ENCODE measurements at regions of chr10 and their contacts with region 1.

Region 1: GRCh38 chr10:125144693-125145623 is 15.4 kb downstream of the CTBP2 start:
- DNase-seq: no peak
- H3K4me3 ChIP-seq: no peak overlapping the region
- H3K27ac ChIP-seq: peak overlapping the region in 1 of 2 donors; percentile 14
- H3K4me1 ChIP-seq: peaks cover 7 to 94% (median 70%) of the 10 kb centered on the region in 4 donors
- H3K27me3 ChIP-seq: no peaks in the 10 kb centered on the region
- CTCF ChIP-seq: peak; percentile 17 to 21

Region 2: DNA sequence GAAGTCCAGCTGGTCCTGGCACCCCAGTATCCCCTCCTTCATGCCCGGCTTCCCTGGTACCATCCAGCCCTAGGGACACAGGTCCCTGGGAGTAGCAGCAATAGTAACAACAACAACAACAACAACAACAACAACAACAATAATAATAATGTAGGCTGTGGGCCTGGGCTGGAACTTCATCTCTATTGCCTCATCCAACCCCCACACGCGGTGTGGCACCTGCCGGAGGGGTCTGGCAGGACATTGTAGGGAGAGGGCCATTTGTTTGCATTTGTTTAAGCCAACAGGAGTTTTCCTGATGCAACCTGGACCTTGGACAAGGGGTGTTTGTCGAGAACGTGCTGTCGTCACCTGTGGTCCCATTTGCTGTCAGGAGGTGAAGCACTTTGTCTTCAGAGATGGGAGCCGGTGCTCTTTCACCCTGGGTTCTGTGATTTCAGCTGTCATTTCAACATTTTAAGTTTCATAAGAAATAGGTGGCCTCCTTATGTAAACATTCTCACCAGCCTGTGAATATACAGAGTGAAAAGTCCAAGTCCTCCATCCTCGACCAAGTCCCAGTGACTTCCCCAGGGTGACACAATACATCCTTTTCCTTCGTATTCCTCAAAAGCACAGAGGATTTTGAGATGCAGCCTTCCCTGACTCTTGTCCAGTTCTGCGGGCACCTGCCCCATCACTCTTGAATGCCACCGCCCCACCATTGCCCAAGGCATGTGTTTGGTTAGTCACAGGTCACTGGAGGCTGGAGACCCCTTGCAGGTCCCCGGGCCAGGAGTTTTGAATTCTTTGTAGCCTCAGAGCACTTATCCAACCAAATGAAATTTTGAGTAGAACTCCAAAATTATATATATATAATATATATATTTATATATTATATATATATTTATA is 674.2 kb before region 1 on chr10:
- intact Hi-C with region 1: loop called (anchors 5 kb)
- DNase-seq: no peak
- H3K4me3 ChIP-seq: no peak overlapping the region
- H3K27ac ChIP-seq: no peak overlapping the region
- H3K4me1 ChIP-seq: no peaks in the 10 kb centered on the region
- H3K27me3 ChIP-seq: no peaks in the 10 kb centered on the region
- CTCF ChIP-seq: no peak

Region 3: GRCh38 chr10:124875596-124875995 is 269.4 kb before region 1 on chr10:
- intact Hi-C with region 1: no loop called
- DNase-seq: no peak
- H3K4me3 ChIP-seq: no peak overlapping the region
- H3K27ac ChIP-seq: no peak overlapping the region
- H3K4me1 ChIP-seq: no peaks in the 10 kb centered on the region
- H3K27me3 ChIP-seq: no peaks in the 10 kb centered on the region
- CTCF ChIP-seq: no peak

Region 4: GRCh38 chr10:125116652-125117310 is 28.2 kb before region 1 on chr10:
- intact Hi-C with region 1: loop called (anchors 2 kb)
- DNase-seq: peak in 1 of 2 donors; percentile 65
- H3K4me3 ChIP-seq: no peak overlapping the region
- H3K27ac ChIP-seq: peak overlapping the region; percentile 74 to 75
- H3K4me1 ChIP-seq: peaks cover 5 to 87% (median 62%) of the 10 kb centered on the region in 4 donors
- H3K27me3 ChIP-seq: no peaks in the 10 kb centered on the region
- CTCF ChIP-seq: no peak

Measured in tibial artery (tissue), 4 donors.